Thyroid gland (tissue), 4 donors: ENCODE measurements at regions of chr2 and their contacts with region 1.

Region 1: GRCh38 chr2:54866868-54867267 is 143.4 kb downstream of the EML6 start:
- DNase-seq: no peak
- H3K4me3 ChIP-seq: no peak overlapping the region
- H3K27ac ChIP-seq: no peak overlapping the region
- H3K4me1 ChIP-seq: no peaks in the 10 kb centered on the region
- H3K27me3 ChIP-seq: no peaks in the 10 kb centered on the region
- CTCF ChIP-seq: no peak
- POLR2A ChIP-seq: no peak

Region 2: DNA sequence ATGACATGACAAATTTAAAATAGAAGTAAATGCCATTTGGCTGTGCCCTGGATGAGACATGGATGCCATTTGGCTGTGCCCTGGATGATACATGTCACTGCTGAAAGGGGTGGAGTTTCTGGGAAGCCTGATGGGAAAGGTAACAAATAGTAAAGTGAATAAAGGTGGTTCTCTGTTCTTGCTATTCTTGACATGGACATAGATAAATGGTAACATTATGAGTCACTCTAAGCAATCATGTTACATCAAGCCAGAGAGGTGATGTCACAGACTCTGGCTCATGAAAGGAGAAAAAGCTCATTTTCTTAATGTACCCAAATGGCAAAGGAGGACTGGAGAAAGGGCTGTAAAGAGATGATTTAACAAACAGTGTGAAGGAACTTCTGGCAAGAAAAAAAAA is 57.0 kb before region 1 on chr2:
- intact Hi-C with region 1: loop called (anchors 10 kb)
- DNase-seq: no peak
- H3K4me3 ChIP-seq: no peak overlapping the region
- H3K27ac ChIP-seq: no peak overlapping the region
- H3K4me1 ChIP-seq: no peaks in the 10 kb centered on the region
- H3K27me3 ChIP-seq: no peaks in the 10 kb centered on the region
- CTCF ChIP-seq: no peak
- POLR2A ChIP-seq: no peak